Naive thymus-derived CD4-positive, alpha-beta T cell (primary cell): ENCODE measurements at regions of chr3 and their contacts with region 1.

Region 1: GRCh38 chr3:167684388-167684993 is 30.7 kb upstream of the WDR49 start:
- DNase-seq: peak in 8 of 9 donors; percentile 25 to 64 (median 52)
- ATAC-seq: peak; percentile 85
- H3K4me3 ChIP-seq: no peak overlapping the region
- H3K4me3 Mint-ChIP-seq: no peak overlapping the region
- H3K27ac ChIP-seq: no peak overlapping the region
- H3K27ac Mint-ChIP-seq: no peak overlapping the region
- H3K4me1 ChIP-seq: no peaks in the 10 kb centered on the region
- H3K4me1 Mint-ChIP-seq: peaks cover 0 to 3% (median 0%) of the 10 kb centered on the region in 7 donors
- H3K27me3 ChIP-seq: no peaks in the 10 kb centered on the region
- H3K27me3 Mint-ChIP-seq: no peaks in the 10 kb centered on the region

Region 2: GRCh38 chr3:167380004-167380689 is 304.3 kb before region 1 on chr3 and contains the start of gene ZBBX:
- CTCF ChIA-PET with region 1: no interaction called
- POLR2A ChIA-PET with region 1: no interaction called
- intact Hi-C with region 1: loop called (anchors 1 kb)
- DNase-seq: peak; percentile 75 to 87 (median 83)
- ATAC-seq: peak; percentile 95
- H3K4me3 ChIP-seq: peak within 1 kb of the TSS; percentile 49
- H3K4me3 Mint-ChIP-seq: peak within 1 kb of the TSS; percentile 71 to 91 (median 85)
- H3K27ac ChIP-seq: no peak within 1 kb of the TSS
- H3K27ac Mint-ChIP-seq: peak within 1 kb of the TSS; percentile 58 to 92 (median 77)
- H3K4me1 ChIP-seq: peaks cover 0 to 3% of the 10 kb centered on the region in 2 donors
- H3K4me1 Mint-ChIP-seq: peaks cover 5 to 14% (median 7%) of the 10 kb centered on the region in 7 donors
- H3K27me3 ChIP-seq: no peaks in the 10 kb centered on the region
- H3K27me3 Mint-ChIP-seq: peaks cover 0 to 15% (median 6%) of the 10 kb centered on the region in 5 donors
- total RNA-seq, gene ZBBX: not detected

Region 3: DNA sequence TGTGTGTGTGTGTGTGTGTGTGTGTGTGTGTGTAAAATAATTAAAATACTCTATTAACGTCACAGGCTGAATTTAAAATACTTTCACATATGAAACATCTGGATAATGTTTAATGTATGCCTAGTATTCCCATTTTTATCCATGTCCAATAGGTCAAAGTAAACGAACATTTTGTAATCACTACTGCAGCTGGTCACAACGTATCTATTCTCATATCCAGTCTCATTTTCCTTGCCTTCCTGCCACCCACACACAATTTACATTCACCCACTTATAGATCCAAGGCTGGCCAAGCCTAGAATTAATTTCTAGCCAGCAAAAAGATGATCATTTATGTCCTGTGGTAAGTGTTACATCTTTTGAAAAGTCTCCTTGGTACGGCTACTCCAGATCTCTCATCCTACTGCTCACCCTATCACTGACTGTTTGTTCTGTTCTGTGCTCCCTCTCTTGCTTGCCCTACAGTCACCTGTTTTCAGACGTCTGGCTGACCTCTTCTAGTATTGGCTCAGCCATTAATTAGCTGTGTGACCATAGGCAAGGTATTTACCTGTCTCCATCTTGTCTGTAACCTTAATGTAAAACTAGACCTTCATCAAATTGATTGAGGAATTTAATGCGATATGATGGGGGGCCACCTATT is 228.2 kb before region 1 on chr3:
- CTCF ChIA-PET with region 1: no interaction called
- POLR2A ChIA-PET with region 1: no interaction called
- intact Hi-C with region 1: no loop called
- DNase-seq: no peak
- ATAC-seq: no peak
- H3K4me3 ChIP-seq: no peak overlapping the region
- H3K4me3 Mint-ChIP-seq: no peak overlapping the region
- H3K27ac ChIP-seq: no peak overlapping the region
- H3K27ac Mint-ChIP-seq: no peak overlapping the region
- H3K4me1 ChIP-seq: no peaks in the 10 kb centered on the region
- H3K4me1 Mint-ChIP-seq: no peaks in the 10 kb centered on the region
- H3K27me3 ChIP-seq: no peaks in the 10 kb centered on the region
- H3K27me3 Mint-ChIP-seq: peaks cover 0 to 12% (median 4%) of the 10 kb centered on the region in 5 donors

Region 4: GRCh38 chr3:167705840-167706239 is 21.3 kb after region 1 on chr3:
- CTCF ChIA-PET with region 1: interaction called, 3 read pairs
- POLR2A ChIA-PET with region 1: no interaction called
- intact Hi-C with region 1: loop called in 1 of 2 experiments (anchors 2 kb)
- DNase-seq: no peak
- ATAC-seq: no peak
- H3K4me3 ChIP-seq: no peak overlapping the region
- H3K4me3 Mint-ChIP-seq: no peak overlapping the region
- H3K27ac ChIP-seq: no peak overlapping the region
- H3K27ac Mint-ChIP-seq: peak overlapping the region in 1 of 9 donors; percentile 8
- H3K4me1 ChIP-seq: no peaks in the 10 kb centered on the region
- H3K4me1 Mint-ChIP-seq: peaks cover 14 to 52% (median 46%) of the 10 kb centered on the region in 7 donors
- H3K27me3 ChIP-seq: no peaks in the 10 kb centered on the region
- H3K27me3 Mint-ChIP-seq: no peaks in the 10 kb centered on the region